Sigmoid colon (tissue), 7 donors: ENCODE measurements at regions of chr2 and their contacts with region 1.

Region 1: GRCh38 chr2:189179570-189179950 is at the start of gene COL5A2:
- DNase-seq: peak; percentile 79
- H3K4me3 ChIP-seq: peak within 1 kb of the TSS; percentile 58 to 69 (median 66)
- H3K27ac ChIP-seq: peak within 1 kb of the TSS; percentile 77 to 91 (median 86)
- H3K4me1 ChIP-seq: peaks cover 0 to 28% (median 14%) of the 10 kb centered on the region in 4 donors
- H3K27me3 ChIP-seq: no peaks in the 10 kb centered on the region
- CTCF ChIP-seq: no peak
- EP300 ChIP-seq: no peak
- POLR2A ChIP-seq: peak in 1 of 2 donors; percentile 42
- total RNA-seq, gene COL5A2: 60.9 to 164 (median 90.0) TPM

Region 2: GRCh38 chr2:189115126-189115525 is 64.4 kb before region 1 on chr2:
- intact Hi-C with region 1: loop called (anchors 5 kb)
- DNase-seq: no peak
- H3K4me3 ChIP-seq: no peak overlapping the region
- H3K27ac ChIP-seq: peak overlapping the region in 2 of 4 donors; percentile 36 to 38
- H3K4me1 ChIP-seq: peaks cover 0 to 51% (median 40%) of the 10 kb centered on the region in 4 donors
- H3K27me3 ChIP-seq: no peaks in the 10 kb centered on the region
- CTCF ChIP-seq: no peak
- EP300 ChIP-seq: no peak
- POLR2A ChIP-seq: no peak

Region 3: DNA sequence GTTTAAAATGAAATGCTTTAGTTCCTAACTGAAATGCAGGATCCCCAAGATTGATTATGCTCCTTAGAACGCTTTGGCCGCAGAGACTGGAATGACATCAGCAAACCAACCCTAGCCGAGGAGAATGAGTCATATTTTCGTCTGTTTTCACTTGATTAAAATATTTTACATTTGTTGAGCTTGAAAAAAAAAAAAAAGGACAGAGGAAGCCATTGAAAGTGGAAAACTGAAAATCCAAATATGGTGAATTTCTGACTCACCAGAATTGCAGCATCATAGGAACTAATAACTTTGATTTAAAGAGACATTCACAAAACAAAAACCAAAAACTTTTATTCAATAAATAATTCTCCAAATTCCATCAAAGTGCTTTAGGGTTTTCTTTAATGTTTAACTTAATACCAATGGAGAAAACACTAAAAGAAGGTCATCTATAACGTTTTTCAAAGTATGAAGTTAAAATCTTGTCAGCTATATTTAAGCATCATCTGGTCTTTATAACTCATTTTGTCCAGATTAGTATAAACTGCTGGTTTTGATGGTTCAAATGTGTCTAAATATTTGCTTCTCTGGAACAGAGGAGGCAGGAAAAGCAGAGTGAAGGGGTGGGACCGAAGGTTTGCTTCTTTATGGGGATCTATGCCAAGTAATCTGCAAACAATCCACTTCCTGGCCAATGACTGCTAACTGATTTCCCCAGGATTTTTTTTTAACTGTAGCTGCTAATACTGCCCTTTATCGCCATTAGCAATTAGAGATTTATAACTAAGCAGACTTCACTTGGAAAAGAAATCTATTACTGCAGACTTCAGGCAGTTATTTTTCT is 30.9 kb after region 1 on chr2:
- intact Hi-C with region 1: loop called (anchors 5 kb)
- DNase-seq: peak; percentile 88
- H3K4me3 ChIP-seq: peak overlapping the region; percentile 0 to 33 (median 18)
- H3K27ac ChIP-seq: peak overlapping the region; percentile 78 to 85 (median 83)
- H3K4me1 ChIP-seq: peaks cover 0 to 31% (median 23%) of the 10 kb centered on the region in 4 donors
- H3K27me3 ChIP-seq: no peaks in the 10 kb centered on the region
- CTCF ChIP-seq: no peak
- EP300 ChIP-seq: no peak
- POLR2A ChIP-seq: no peak

Region 4: GRCh38 chr2:189232759-189233406 is 53.3 kb after region 1 on chr2:
- intact Hi-C with region 1: no loop called
- DNase-seq: no peak
- H3K4me3 ChIP-seq: no peak overlapping the region
- H3K27ac ChIP-seq: no peak overlapping the region
- H3K4me1 ChIP-seq: no peaks in the 10 kb centered on the region
- H3K27me3 ChIP-seq: no peaks in the 10 kb centered on the region
- CTCF ChIP-seq: no peak
- EP300 ChIP-seq: no peak
- POLR2A ChIP-seq: no peak

Region 5: GRCh38 chr2:189261431-189261841 is 81.9 kb after region 1 on chr2:
- intact Hi-C with region 1: no loop called
- DNase-seq: no peak
- H3K4me3 ChIP-seq: no peak overlapping the region
- H3K27ac ChIP-seq: no peak overlapping the region
- H3K4me1 ChIP-seq: no peaks in the 10 kb centered on the region
- H3K27me3 ChIP-seq: no peaks in the 10 kb centered on the region
- CTCF ChIP-seq: no peak
- EP300 ChIP-seq: no peak
- POLR2A ChIP-seq: no peak

Region 6: GRCh38 chr2:189276277-189276676 is 96.7 kb after region 1 on chr2:
- intact Hi-C with region 1: no loop called
- DNase-seq: no peak
- H3K4me3 ChIP-seq: no peak overlapping the region
- H3K27ac ChIP-seq: no peak overlapping the region
- H3K4me1 ChIP-seq: no peaks in the 10 kb centered on the region
- H3K27me3 ChIP-seq: no peaks in the 10 kb centered on the region
- CTCF ChIP-seq: no peak
- EP300 ChIP-seq: no peak
- POLR2A ChIP-seq: no peak

Region 7: GRCh38 chr2:189287982-189288521 is 108.5 kb after region 1 on chr2:
- intact Hi-C with region 1: loop called (anchors 5 kb)
- DNase-seq: no peak
- H3K4me3 ChIP-seq: no peak overlapping the region
- H3K27ac ChIP-seq: peak overlapping the region in 2 of 4 donors; percentile 37 to 67
- H3K4me1 ChIP-seq: peaks cover 0 to 34% (median 25%) of the 10 kb centered on the region in 4 donors
- H3K27me3 ChIP-seq: no peaks in the 10 kb centered on the region
- CTCF ChIP-seq: peak; percentile 38 to 52 (median 50)
- EP300 ChIP-seq: no peak
- POLR2A ChIP-seq: no peak

Region 8: GRCh38 chr2:189337656-189338055 is 158.1 kb after region 1 on chr2:
- intact Hi-C with region 1: loop called (anchors 10 kb)
- DNase-seq: no peak
- H3K4me3 ChIP-seq: no peak overlapping the region
- H3K27ac ChIP-seq: peak overlapping the region; percentile 64 to 83 (median 78)
- H3K4me1 ChIP-seq: peaks cover 0 to 25% (median 8%) of the 10 kb centered on the region in 4 donors
- H3K27me3 ChIP-seq: no peaks in the 10 kb centered on the region
- CTCF ChIP-seq: no peak
- EP300 ChIP-seq: peak in 3 of 4 donors; percentile 19 to 78 (median 52)
- POLR2A ChIP-seq: no peak